ENCODE measurements at regions of chr9 and their contacts with region 1.

Region 1: DNA sequence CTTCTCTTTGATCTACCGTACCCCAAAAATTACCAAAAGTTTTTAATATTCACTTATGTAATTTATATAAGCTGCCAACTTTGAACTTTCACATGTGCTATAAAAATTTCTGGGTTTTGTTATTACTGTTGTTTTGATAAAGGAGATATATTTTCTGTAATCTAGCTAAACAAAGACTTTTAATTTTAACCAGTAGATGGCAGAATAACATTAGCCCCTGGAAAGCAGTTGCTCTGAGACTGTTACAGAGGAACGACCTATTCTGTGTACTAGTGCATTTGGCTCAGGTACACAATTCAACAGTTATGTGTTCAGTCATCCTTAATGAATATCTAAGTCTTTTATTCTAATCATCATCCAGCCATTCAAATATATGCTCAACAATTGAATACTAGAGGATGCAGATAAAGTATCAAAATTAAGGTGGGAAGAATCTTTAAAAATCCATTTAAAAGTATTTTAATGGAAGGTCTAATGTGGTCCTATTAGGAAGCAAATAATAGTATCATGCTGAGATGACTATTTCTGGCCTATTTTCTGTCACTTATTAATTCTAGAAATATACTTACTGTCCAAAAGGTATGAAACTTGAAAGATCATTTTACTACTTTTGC is 8.6 kb downstream of the KLHL9 start:
- DNase-seq: no peak
- ATAC-seq: peak; percentile 79
- H3K4me3 ChIP-seq: no peak overlapping the region
- H3K27ac ChIP-seq: no peak overlapping the region
- H3K4me1 ChIP-seq: peaks cover 0 to 2% of the 10 kb centered on the region in 2 donors
- H3K27me3 ChIP-seq: no peaks in the 10 kb centered on the region

Region 2: GRCh38 chr9:20611751-20612287 is 714.8 kb before region 1 on chr9:
- intact Hi-C with region 1: loop called in 1 of 2 experiments (anchors 10 kb)
- DNase-seq: no peak
- ATAC-seq: no peak
- H3K4me3 ChIP-seq: no peak overlapping the region
- H3K27ac ChIP-seq: no peak overlapping the region
- H3K4me1 ChIP-seq: no peaks in the 10 kb centered on the region
- H3K27me3 ChIP-seq: no peaks in the 10 kb centered on the region

Region 3: DNA sequence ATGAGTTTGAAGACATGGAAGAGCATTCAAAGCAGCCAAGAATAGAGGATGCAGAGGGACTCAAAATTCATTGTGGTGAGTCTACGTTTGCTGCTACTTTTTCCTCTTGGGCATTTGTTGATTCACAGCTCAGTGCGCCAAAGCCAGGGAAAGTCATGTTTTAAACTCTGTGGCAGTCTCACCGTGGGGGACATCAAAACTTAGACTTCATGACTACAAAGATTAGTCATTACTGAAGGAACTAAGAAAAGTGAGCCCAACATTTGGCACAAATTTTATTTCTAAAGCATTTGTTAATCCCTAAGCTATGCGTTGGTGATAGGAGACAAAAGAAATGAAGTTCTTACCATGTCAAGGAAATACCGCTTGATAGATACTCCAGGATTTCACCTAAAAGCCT is 402.1 kb after region 1 on chr9:
- intact Hi-C with region 1: no loop called
- DNase-seq: no peak
- ATAC-seq: no peak
- H3K4me3 ChIP-seq: no peak overlapping the region
- H3K27ac ChIP-seq: no peak overlapping the region
- H3K4me1 ChIP-seq: no peaks in the 10 kb centered on the region
- H3K27me3 ChIP-seq: no peaks in the 10 kb centered on the region